Activated CD8-positive, alpha-beta T cell treated with anti-CD3 and anti-CD28 coated beads for 36 hours (primary cell): ENCODE measurements at regions of chr1 and their contacts with region 1.

Region 1: DNA sequence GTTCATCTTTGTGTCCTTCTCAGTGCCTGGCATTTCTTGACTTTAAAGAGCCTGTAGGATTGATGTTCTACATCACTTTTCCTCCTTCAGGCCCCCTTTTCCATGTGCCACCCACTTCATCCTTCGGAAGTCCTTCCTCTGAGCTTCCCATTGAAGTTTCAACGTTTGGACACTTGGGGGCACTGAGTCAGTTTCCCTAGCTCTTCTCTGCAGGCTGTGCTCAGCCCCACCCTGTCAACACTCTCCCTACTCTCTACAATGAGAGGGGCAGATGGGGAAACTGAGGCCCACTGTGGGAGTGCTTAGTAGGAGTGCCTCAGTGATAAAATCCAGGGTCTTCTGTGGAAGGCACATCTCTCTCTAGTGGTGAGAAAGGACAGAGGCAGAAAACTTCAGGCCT is 11.9 kb downstream of the KCNJ10 start:
- DNase-seq: no peak
- ATAC-seq: no peak
- H3K4me3 Mint-ChIP-seq: no peak overlapping the region
- H3K27ac Mint-ChIP-seq: no peak overlapping the region
- H3K4me1 Mint-ChIP-seq: no peaks in the 10 kb centered on the region
- H3K27me3 Mint-ChIP-seq: peaks cover 15% of the 10 kb centered on the region
- CTCF ChIP-seq: no peak

Region 2: GRCh38 chr1:160031365-160032164 is 26.5 kb before region 1 on chr1 and contains the start of gene PIGM:
- CTCF ChIA-PET with region 1: interaction called, 693 read pairs
- POLR2A ChIA-PET with region 1: interaction called, 5 read pairs
- intact Hi-C with region 1: loop called (anchors 2 kb)
- DNase-seq: peak; percentile 98
- ATAC-seq: peak; percentile 99
- H3K4me3 Mint-ChIP-seq: peak within 1 kb of the TSS; percentile 88
- H3K27ac Mint-ChIP-seq: peak within 1 kb of the TSS; percentile 81
- H3K4me1 Mint-ChIP-seq: peaks cover 32% of the 10 kb centered on the region
- H3K27me3 Mint-ChIP-seq: no peaks in the 10 kb centered on the region
- CTCF ChIP-seq: no peak
- total RNA-seq, gene PIGM: 3.9 to 4.0 TPM